ENCODE measurements at regions of chr20 and their contacts with region 1.

Region 1: GRCh38 chr20:41161886-41162285 is 24.5 kb downstream of the PLCG1 start:
- DNase-seq: no peak
- ATAC-seq: no peak
- H3K4me3 ChIP-seq: no peak overlapping the region
- H3K4me3 Mint-ChIP-seq: peak overlapping the region in 9 of 10 donors; percentile 25 to 67 (median 39)
- H3K27ac ChIP-seq: peak overlapping the region; percentile 82
- H3K27ac Mint-ChIP-seq: peak overlapping the region; percentile 79 to 100 (median 94)
- H3K4me1 ChIP-seq: peaks cover 59 to 61% of the 10 kb centered on the region in 2 donors
- H3K4me1 Mint-ChIP-seq: peaks cover 60 to 81% (median 76%) of the 10 kb centered on the region in 7 donors
- H3K27me3 ChIP-seq: no peaks in the 10 kb centered on the region
- H3K27me3 Mint-ChIP-seq: no peaks in the 10 kb centered on the region

Region 2: GRCh38 chr20:41142919-41143318 is 19.0 kb before region 1 on chr20:
- CTCF ChIA-PET with region 1: interaction called, 236 read pairs
- POLR2A ChIA-PET with region 1: interaction called, 604 read pairs
- intact Hi-C with region 1: loop called (anchors 1 kb)
- DNase-seq: peak in 6 of 9 donors; percentile 27 to 54 (median 36)
- ATAC-seq: peak; percentile 67
- H3K4me3 ChIP-seq: peak overlapping the region; percentile 82
- H3K4me3 Mint-ChIP-seq: peak overlapping the region; percentile 88 to 98 (median 95)
- H3K27ac ChIP-seq: peak overlapping the region; percentile 91
- H3K27ac Mint-ChIP-seq: peak overlapping the region; percentile 84 to 100 (median 94)
- H3K4me1 ChIP-seq: peaks cover 81 to 85% of the 10 kb centered on the region in 2 donors
- H3K4me1 Mint-ChIP-seq: peaks cover 84 to 93% (median 88%) of the 10 kb centered on the region in 7 donors
- H3K27me3 ChIP-seq: no peaks in the 10 kb centered on the region
- H3K27me3 Mint-ChIP-seq: no peaks in the 10 kb centered on the region

Region 3: DNA sequence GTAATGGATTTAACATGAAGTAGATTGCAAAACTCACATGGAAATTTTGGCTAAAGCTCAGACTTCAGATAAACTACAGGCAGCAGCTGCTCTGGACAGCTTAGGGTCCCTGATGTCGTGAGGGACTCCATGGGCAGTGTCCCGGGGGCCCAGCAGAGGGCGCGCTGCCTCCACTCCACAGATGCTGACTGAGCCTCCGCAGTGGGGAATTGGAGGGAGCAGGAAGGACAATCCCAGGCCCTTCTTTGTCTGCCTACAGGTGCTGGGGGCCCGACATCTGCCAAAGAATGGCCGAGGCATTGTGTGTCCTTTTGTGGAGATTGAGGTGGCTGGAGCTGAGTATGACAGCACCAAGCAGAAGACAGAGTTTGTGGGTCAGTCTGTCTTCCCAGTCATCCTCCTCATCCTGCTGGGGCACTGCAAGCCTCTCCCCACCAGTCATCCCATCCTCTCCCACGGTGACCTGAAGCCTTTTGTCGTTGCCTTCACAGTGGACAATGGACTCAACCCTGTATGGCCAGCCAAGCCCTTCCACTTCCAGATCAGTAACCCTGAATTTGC is 11.4 kb after region 1 on chr20:
- CTCF ChIA-PET with region 1: interaction called, 35 read pairs
- POLR2A ChIA-PET with region 1: interaction called, 6 read pairs
- intact Hi-C with region 1: loop called in 1 of 2 experiments (anchors 2 kb)
- DNase-seq: peak; percentile 34 to 72 (median 56)
- ATAC-seq: peak; percentile 88
- H3K4me3 ChIP-seq: no peak overlapping the region
- H3K4me3 Mint-ChIP-seq: no peak overlapping the region
- H3K27ac ChIP-seq: no peak overlapping the region
- H3K27ac Mint-ChIP-seq: peak overlapping the region in 7 of 9 donors; percentile 49 to 88 (median 79)
- H3K4me1 ChIP-seq: no peaks in the 10 kb centered on the region
- H3K4me1 Mint-ChIP-seq: peaks cover 8 to 36% (median 21%) of the 10 kb centered on the region in 7 donors
- H3K27me3 ChIP-seq: no peaks in the 10 kb centered on the region
- H3K27me3 Mint-ChIP-seq: no peaks in the 10 kb centered on the region

Measured in naive thymus-derived CD4-positive, alpha-beta T cell (primary cell).